ENCODE measurements at regions of chr4 and their contacts with region 1.

Region 1: DNA sequence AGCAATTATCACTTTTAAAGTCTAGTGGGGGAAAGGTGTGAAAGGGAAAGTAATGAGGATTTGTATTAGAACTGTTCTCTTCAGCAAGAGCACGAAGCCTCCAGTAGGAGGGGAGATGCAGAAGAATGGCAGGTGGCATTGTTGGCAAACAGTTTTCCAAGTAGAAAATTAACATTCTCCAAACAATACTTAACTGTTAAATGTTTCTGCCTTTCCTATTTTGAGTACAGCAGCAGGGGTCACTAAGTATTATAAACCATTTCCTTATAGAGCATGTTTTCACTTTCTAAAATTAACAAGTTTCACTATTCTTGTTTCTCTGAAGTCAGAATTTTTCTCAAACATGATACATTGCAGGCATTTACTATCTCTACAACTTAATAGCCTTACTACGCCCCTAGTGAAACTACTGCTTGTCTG is 58.7 kb downstream of the LEF1 start:
- DNase-seq: no peak
- H3K4me3 Mint-ChIP-seq: peak overlapping the region; percentile 58
- H3K27ac Mint-ChIP-seq: peak overlapping the region; percentile 94
- H3K4me1 Mint-ChIP-seq: peaks cover 92% of the 10 kb centered on the region
- H3K27me3 Mint-ChIP-seq: no peaks in the 10 kb centered on the region

Region 2: GRCh38 chr4:108135549-108136209 is 25.7 kb after region 1 on chr4:
- CTCF ChIA-PET with region 1: interaction called, 10 read pairs
- POLR2A ChIA-PET with region 1: interaction called, 4 read pairs
- DNase-seq: no peak
- H3K4me3 Mint-ChIP-seq: peak overlapping the region; percentile 48
- H3K27ac Mint-ChIP-seq: peak overlapping the region; percentile 84
- H3K4me1 Mint-ChIP-seq: peaks cover 86% of the 10 kb centered on the region
- H3K27me3 Mint-ChIP-seq: no peaks in the 10 kb centered on the region

Region 3: DNA sequence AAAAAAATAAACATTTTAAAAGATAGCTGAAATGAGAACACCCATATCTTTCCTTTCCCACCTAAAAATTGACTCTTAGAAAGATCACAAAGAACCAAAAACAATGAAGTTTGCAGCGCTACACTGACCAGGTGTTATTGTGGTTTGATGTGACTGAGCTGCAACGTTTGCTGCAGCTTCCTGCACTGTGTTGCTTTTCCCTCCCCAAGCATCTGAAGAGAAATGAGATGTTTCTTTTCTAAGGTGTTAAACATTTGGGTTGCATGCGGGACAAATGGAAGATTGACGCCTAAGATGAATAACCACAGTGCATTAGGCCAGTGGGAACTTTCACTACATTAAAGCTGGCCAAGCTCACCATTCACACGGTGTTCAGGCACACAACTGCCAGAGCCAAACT is 49.8 kb after region 1 on chr4:
- CTCF ChIA-PET with region 1: interaction called, 10 read pairs
- POLR2A ChIA-PET with region 1: no interaction called
- DNase-seq: no peak
- H3K4me3 Mint-ChIP-seq: peak overlapping the region; percentile 85
- H3K27ac Mint-ChIP-seq: peak overlapping the region; percentile 57
- H3K4me1 Mint-ChIP-seq: peaks cover 70% of the 10 kb centered on the region
- H3K27me3 Mint-ChIP-seq: no peaks in the 10 kb centered on the region